PC-9 (cell line): ENCODE measurements at regions of chr15 and their contacts with region 1.

Region 1: DNA sequence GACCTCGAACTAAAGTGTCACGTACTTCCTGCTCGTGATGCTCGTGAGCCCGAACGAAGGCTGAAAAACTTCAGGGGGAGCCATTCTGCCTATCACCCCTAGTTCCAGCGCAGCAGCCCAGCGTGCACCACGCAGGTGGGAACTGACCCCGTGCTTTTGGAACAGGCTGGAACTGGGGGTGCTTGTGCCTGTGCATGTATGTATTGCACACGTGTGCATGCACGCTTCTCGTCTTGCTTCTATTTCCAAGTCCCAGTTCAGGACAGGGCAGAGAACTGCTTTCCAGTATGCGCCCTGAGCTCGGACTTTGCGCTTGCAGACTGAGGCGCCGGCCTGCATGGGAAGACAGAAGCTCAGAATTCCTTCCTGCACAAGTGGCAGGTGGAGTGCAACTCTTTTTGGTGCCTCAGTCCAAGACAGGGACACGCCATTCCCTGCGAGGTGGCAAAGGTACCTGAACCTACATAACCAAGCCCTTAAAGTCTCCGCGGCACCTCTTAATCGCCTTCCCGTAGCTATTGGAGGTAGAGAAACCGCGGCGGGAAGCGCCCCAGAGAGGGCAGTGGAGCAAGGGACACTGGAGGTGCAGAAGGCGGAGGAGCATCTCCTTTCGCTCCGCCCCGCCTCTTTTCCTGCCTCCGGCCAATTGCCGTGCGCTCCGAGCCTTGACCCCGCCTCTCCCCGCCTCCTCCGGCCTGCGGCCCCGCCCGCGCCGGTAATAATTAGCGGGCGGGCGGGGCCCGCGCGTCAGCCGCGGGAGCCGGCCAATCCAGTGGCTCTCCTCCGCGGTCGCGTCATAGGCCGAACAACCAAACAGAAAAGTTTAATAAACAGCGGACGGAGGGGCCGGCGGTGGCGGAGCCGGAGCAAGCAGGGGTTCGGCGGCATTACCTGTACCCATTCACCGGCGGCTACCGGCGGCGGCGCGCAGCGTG is at the start of gene ZFAND6:
- DNase-seq: peak; percentile 85 to 96
- H3K4me3 ChIP-seq: peak within 1 kb of the TSS; percentile 93
- H3K27ac ChIP-seq: peak within 1 kb of the TSS; percentile 92
- H3K4me1 ChIP-seq: peaks cover 32% of the 10 kb centered on the region
- H3K27me3 ChIP-seq: no peaks in the 10 kb centered on the region
- CTCF ChIP-seq: no peak
- total RNA-seq, gene ZFAND6: 43.6 and 68.3 TPM in 2 replicates

Region 2: GRCh38 chr15:79682285-79682684 is 376.8 kb before region 1 on chr15:
- CTCF ChIA-PET with region 1: no interaction called
- POLR2A ChIA-PET with region 1: no interaction called
- intact Hi-C with region 1: no loop called
- DNase-seq: no peak
- H3K4me3 ChIP-seq: no peak overlapping the region
- H3K27ac ChIP-seq: no peak overlapping the region
- H3K4me1 ChIP-seq: peaks cover 18% of the 10 kb centered on the region; the same call in 1 of the 2 replicates
- H3K27me3 ChIP-seq: no peaks in the 10 kb centered on the region; the same call in 1 of the 2 replicates
- CTCF ChIP-seq: no peak

Region 3: GRCh38 chr15:79896637-79897379 is 162.3 kb before region 1 on chr15 and contains the start of gene MTHFS:
- CTCF ChIA-PET with region 1: no interaction called
- POLR2A ChIA-PET with region 1: no interaction called
- intact Hi-C with region 1: loop called (anchors 1 kb)
- DNase-seq: peak; percentile 66 to 84
- H3K4me3 ChIP-seq: peak within 1 kb of the TSS; percentile 70
- H3K27ac ChIP-seq: peak within 1 kb of the TSS; percentile 79
- H3K4me1 ChIP-seq: peaks cover 39% of the 10 kb centered on the region
- H3K27me3 ChIP-seq: no peaks in the 10 kb centered on the region
- CTCF ChIP-seq: peak; percentile 64
- total RNA-seq, gene MTHFS: 27.1 and 33.6 TPM in 2 replicates

Region 4: DNA sequence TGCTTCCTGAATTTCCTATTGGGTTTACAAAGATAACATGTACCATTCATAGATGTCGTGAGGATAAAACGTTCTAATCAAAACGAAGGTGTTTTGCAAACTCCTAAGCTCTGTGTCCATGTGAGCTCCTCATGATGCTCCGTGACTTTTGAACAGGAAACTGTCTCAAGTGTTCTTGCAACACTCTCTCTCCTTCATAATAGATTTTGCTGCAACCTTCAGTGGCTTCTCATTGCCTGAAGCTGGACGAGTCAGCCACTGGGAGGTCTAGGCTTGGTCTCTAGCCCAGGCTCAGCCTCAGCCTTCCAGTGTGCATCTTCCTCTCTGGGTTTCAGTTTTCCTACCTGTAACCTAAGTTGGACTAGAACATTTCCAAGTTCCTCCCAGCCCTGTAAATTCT is 69.4 kb before region 1 on chr15:
- CTCF ChIA-PET with region 1: no interaction called
- POLR2A ChIA-PET with region 1: no interaction called
- intact Hi-C with region 1: loop called (anchors 1 kb)
- DNase-seq: peak in 1 of 2 experiments; percentile 48
- H3K4me3 ChIP-seq: no peak overlapping the region
- H3K27ac ChIP-seq: no peak overlapping the region
- H3K4me1 ChIP-seq: peaks cover 20% of the 10 kb centered on the region
- H3K27me3 ChIP-seq: no peaks in the 10 kb centered on the region
- CTCF ChIP-seq: no peak

Region 5: GRCh38 chr15:80072285-80072994 is 13.3 kb after region 1 on chr15:
- CTCF ChIA-PET with region 1: interaction called, 5 read pairs
- POLR2A ChIA-PET with region 1: interaction called, 7 read pairs
- intact Hi-C with region 1: loop called (anchors 1 kb)
- DNase-seq: peak; percentile 15 to 88
- H3K4me3 ChIP-seq: peak overlapping the region; percentile 54
- H3K27ac ChIP-seq: peak overlapping the region; percentile 50
- H3K4me1 ChIP-seq: peaks cover 38% of the 10 kb centered on the region
- H3K27me3 ChIP-seq: no peaks in the 10 kb centered on the region
- CTCF ChIP-seq: no peak

Region 6: DNA sequence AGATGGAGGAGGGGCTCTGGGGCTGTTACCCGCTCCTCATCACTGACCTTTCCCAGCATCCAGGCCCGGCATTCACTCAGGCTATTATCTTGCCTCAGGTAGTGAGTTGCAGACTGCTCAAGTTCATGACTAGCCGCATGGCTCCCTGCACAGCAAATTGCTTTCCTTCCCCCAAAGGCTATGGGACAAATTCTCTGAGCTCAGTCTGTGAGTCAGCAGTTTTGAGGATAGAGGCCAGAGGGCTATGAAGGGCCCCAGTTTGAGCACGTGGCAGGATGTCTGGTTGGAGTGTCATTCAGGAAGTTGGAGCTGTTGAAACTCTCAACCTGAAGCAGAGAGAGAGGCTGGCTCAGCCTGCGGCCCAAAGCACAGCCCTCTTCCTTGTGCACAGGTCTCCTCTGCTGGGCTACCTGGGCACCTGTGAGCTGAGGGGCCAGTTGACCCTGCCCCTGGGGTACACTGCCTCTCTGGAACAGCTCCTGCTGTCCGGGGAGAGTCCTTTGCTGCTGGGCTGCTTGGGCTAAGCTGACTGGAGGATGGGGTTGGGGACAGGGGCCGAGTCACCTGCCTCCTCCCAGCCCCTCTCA is 101.5 kb after region 1 on chr15:
- CTCF ChIA-PET with region 1: no interaction called
- POLR2A ChIA-PET with region 1: interaction called, 11 read pairs
- intact Hi-C with region 1: no loop called
- DNase-seq: peak; percentile 52 to 93
- H3K4me3 ChIP-seq: no peak overlapping the region
- H3K27ac ChIP-seq: peak overlapping the region; percentile 72
- H3K4me1 ChIP-seq: peaks cover 25% of the 10 kb centered on the region
- H3K27me3 ChIP-seq: no peaks in the 10 kb centered on the region
- CTCF ChIP-seq: no peak